Ovary (tissue), 10 donors: ENCODE measurements at regions of chr15 and their contacts with region 1.

Region 1: GRCh38 chr15:41557673-41558399 is 1.2 kb upstream of the TYRO3 start:
- DNase-seq: peak; percentile 81 to 90 (median 83)
- H3K4me3 ChIP-seq: peak overlapping the region; percentile 47
- H3K27ac ChIP-seq: peak overlapping the region; percentile 78 to 83
- H3K4me1 ChIP-seq: peaks cover 22% of the 10 kb centered on the region
- H3K27me3 ChIP-seq: no peaks in the 10 kb centered on the region
- CTCF ChIP-seq: peak; percentile 76 to 81 (median 79)
- EP300 ChIP-seq: no peak
- POLR2A ChIP-seq: no peak

Region 2: DNA sequence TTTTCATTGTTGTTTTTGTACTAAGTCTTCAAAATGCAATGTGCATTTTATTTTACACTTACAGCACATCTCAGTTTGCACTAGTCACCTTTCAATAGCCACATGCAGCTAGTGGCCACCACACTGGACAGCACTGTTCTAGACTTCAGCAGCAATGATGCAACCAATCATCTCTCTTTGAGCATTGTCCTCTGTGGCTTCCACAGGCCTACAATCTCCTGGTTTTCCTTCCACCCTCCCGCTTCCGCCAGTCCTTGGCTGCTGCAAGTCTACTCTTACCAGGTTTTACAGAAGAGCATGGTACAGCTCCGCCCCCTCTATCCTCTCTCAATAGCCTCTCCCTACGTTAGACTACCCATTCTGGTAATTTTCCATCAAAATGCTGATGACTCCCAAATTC is 1750.0 kb before region 1 on chr15:
- intact Hi-C with region 1: no loop called
- DNase-seq: no peak
- H3K4me3 ChIP-seq: no peak overlapping the region
- H3K27ac ChIP-seq: no peak overlapping the region
- H3K4me1 ChIP-seq: no peaks in the 10 kb centered on the region
- H3K27me3 ChIP-seq: no peaks in the 10 kb centered on the region
- CTCF ChIP-seq: no peak
- EP300 ChIP-seq: no peak
- POLR2A ChIP-seq: no peak

Region 3: GRCh38 chr15:41603941-41604911 is 46.4 kb after region 1 on chr15:
- intact Hi-C with region 1: loop called in 1 of 4 experiments (anchors 5 kb)
- DNase-seq: peak; percentile 56 to 80 (median 67)
- H3K4me3 ChIP-seq: peak overlapping the region; percentile 17
- H3K27ac ChIP-seq: no peak overlapping the region
- H3K4me1 ChIP-seq: peaks cover 4% of the 10 kb centered on the region
- H3K27me3 ChIP-seq: no peaks in the 10 kb centered on the region
- CTCF ChIP-seq: peak; percentile 49 to 74 (median 56)
- EP300 ChIP-seq: no peak
- POLR2A ChIP-seq: peak; percentile 23

Region 4: GRCh38 chr15:41660235-41661077 is 102.6 kb after region 1 on chr15 and contains the start of gene MGA:
- intact Hi-C with region 1: loop called in 1 of 4 experiments (anchors 5 kb)
- DNase-seq: peak; percentile 88 to 93 (median 89)
- H3K4me3 ChIP-seq: peak within 1 kb of the TSS; percentile 30
- H3K27ac ChIP-seq: peak within 1 kb of the TSS; percentile 65 to 80
- H3K4me1 ChIP-seq: peaks cover 5% of the 10 kb centered on the region
- H3K27me3 ChIP-seq: no peaks in the 10 kb centered on the region
- CTCF ChIP-seq: peak in 2 of 3 donors; percentile 23 to 34
- EP300 ChIP-seq: no peak
- POLR2A ChIP-seq: peak; percentile 43
- total RNA-seq, gene MGA: 43.4 to 90.2 (median 61.6) TPM

Region 5: DNA sequence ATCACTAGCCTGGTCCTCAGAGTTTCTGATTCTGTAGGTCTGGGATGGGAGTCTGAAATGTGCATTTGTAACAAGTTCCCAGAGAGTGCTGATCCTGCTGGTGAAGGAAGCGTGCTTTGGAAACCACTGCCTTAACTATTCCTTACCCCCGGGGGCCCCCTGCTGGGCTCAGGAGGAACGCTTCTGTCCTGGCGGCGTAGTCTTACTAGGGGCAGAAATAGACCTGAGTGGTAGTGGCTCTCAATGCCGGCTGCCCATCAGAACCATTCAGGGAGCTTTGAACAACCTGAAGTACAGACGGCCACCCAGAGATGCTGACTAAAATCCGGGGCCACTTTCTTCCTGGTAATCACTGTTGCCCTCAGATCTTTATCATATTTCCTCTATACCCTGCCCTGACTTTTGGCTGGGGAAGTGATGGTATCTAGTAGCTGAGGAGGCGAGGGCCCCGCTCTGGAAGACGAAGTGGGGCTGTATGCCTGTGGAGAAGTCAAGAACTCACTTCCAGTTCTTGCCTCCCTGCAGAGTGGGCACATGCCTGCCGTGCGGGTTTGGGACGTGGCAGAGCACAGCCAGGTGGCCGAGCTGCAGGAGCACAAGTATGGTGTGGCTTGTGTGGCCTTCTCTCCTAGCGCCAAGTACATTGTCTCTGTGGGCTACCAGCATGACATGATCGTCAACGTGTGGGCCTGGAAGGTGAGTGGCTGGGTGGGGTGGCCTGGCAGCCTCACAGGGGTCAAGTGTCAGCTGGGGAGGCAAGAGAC is 253.8 kb after region 1 on chr15:
- intact Hi-C with region 1: loop called (anchors 2 to 10 kb)
- DNase-seq: peak; percentile 75 to 92 (median 89)
- H3K4me3 ChIP-seq: no peak overlapping the region
- H3K27ac ChIP-seq: no peak overlapping the region
- H3K4me1 ChIP-seq: no peaks in the 10 kb centered on the region
- H3K27me3 ChIP-seq: no peaks in the 10 kb centered on the region
- CTCF ChIP-seq: peak; percentile 70 to 90 (median 89)
- EP300 ChIP-seq: no peak
- POLR2A ChIP-seq: no peak

Region 6: GRCh38 chr15:41904541-41905005 is 346.7 kb after region 1 on chr15:
- intact Hi-C with region 1: loop called in 2 of 4 experiments (anchors 10 kb)
- DNase-seq: peak; percentile 65 to 80 (median 77)
- H3K4me3 ChIP-seq: no peak overlapping the region
- H3K27ac ChIP-seq: no peak overlapping the region
- H3K4me1 ChIP-seq: peaks cover 2% of the 10 kb centered on the region
- H3K27me3 ChIP-seq: no peaks in the 10 kb centered on the region
- CTCF ChIP-seq: peak; percentile 49 to 70 (median 69)
- EP300 ChIP-seq: no peak
- POLR2A ChIP-seq: no peak